Naive thymus-derived CD4-positive, alpha-beta T cell (primary cell): ENCODE measurements at regions of chr4 and their contacts with region 1.

Region 1: GRCh38 chr4:6783053-6783981 is 790 bp downstream of the KIAA0232 start:
- DNase-seq: peak; percentile 80 to 92 (median 87)
- ATAC-seq: peak; percentile 85
- H3K4me3 ChIP-seq: peak overlapping the region; percentile 85
- H3K4me3 Mint-ChIP-seq: peak overlapping the region; percentile 82 to 88 (median 86)
- H3K27ac ChIP-seq: peak overlapping the region; percentile 97
- H3K27ac Mint-ChIP-seq: peak overlapping the region; percentile 64 to 93 (median 84)
- H3K4me1 ChIP-seq: peaks cover 20 to 21% of the 10 kb centered on the region in 2 donors
- H3K4me1 Mint-ChIP-seq: peaks cover 39 to 75% (median 68%) of the 10 kb centered on the region in 7 donors
- H3K27me3 ChIP-seq: no peaks in the 10 kb centered on the region
- H3K27me3 Mint-ChIP-seq: no peaks in the 10 kb centered on the region

Region 2: DNA sequence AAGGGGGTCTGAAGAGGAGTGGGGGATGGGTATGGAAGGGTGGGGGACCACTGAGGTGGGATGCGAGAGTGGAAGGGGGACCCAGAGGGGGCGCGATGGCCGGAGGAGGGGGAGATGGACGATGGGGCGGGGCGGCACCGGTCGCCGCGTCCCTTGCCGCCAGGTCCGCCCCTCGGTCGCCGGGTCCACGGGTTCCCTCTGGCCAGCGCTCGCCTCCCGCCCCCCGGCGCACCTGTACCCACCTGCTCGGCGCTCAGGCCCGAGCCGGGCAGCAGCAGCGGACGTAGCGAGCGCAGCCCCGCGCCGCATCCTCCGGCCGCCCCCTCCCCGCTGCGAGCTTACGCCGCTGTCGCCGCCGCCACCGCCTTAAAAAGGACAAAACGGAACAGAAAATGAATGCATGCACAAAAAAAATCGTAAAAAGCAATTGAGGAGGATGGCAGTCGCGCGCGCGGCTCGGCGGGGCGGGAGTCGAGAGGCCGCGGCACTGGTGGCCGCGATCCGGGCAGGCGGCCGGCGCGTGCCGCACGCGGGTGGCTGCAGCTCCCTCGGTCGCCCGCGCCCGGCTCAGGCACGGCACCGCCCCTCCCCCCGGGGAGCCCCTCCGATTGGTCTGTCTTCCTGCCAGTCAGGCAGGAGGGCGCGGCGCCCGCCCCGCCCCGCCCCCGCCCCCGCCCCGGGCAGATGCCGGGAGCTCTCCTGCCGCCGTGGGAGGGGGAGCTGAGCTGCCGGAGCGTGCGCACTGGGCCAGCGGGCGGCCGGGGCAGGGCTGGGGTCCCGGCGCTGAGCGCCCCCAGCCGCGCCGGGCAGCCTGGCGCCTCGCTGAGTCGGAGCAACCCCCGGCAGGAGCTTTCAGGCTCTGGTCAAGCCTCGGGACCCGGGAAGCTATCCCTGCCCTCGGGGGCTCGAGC is 583.1 kb before region 1 on chr4 and contains the start of gene JAKMIP1:
- CTCF ChIA-PET with region 1: no interaction called
- POLR2A ChIA-PET with region 1: no interaction called
- intact Hi-C with region 1: loop called in 1 of 2 experiments (anchors 2 kb)
- DNase-seq: peak; percentile 1 to 96 (median 43)
- ATAC-seq: peak; percentile 81
- H3K4me3 ChIP-seq: peak within 1 kb of the TSS; percentile 43
- H3K4me3 Mint-ChIP-seq: peak within 1 kb of the TSS; percentile 61 to 89 (median 76)
- H3K27ac ChIP-seq: no peak within 1 kb of the TSS
- H3K27ac Mint-ChIP-seq: peak within 1 kb of the TSS in 2 of 9 donors; percentile 71 to 73
- H3K4me1 ChIP-seq: peaks cover 8 to 30% of the 10 kb centered on the region in 2 donors
- H3K4me1 Mint-ChIP-seq: peaks cover 5 to 28% (median 17%) of the 10 kb centered on the region in 7 donors
- H3K27me3 ChIP-seq: peaks cover 0 to 6% of the 10 kb centered on the region in 2 donors
- H3K27me3 Mint-ChIP-seq: peaks cover 36 to 66% (median 45%) of the 10 kb centered on the region in 5 donors
- total RNA-seq, gene JAKMIP1: 0.66 to 15.3 (median 4.1) TPM in 3 of 5 experiments, not detected in the others

Region 3: GRCh38 chr4:6673660-6674499 is 109.4 kb before region 1 on chr4:
- CTCF ChIA-PET with region 1: interaction called, 3 read pairs
- POLR2A ChIA-PET with region 1: interaction called, 35 read pairs
- intact Hi-C with region 1: loop called (anchors 1 kb)
- DNase-seq: peak; percentile 89 to 97 (median 95)
- ATAC-seq: peak; percentile 93
- H3K4me3 ChIP-seq: peak overlapping the region; percentile 74
- H3K4me3 Mint-ChIP-seq: peak overlapping the region; percentile 90 to 100 (median 98)
- H3K27ac ChIP-seq: peak overlapping the region; percentile 83
- H3K27ac Mint-ChIP-seq: peak overlapping the region; percentile 88 to 100 (median 98)
- H3K4me1 ChIP-seq: peaks cover 30 to 34% of the 10 kb centered on the region in 2 donors
- H3K4me1 Mint-ChIP-seq: peaks cover 33 to 53% (median 50%) of the 10 kb centered on the region in 7 donors
- H3K27me3 ChIP-seq: no peaks in the 10 kb centered on the region
- H3K27me3 Mint-ChIP-seq: peaks cover 0 to 3% (median 0%) of the 10 kb centered on the region in 5 donors

Region 4: GRCh38 chr4:6768539-6768905 is 14.8 kb before region 1 on chr4:
- CTCF ChIA-PET with region 1: interaction called, 4 read pairs
- POLR2A ChIA-PET with region 1: interaction called, 15 read pairs
- intact Hi-C with region 1: no loop called
- DNase-seq: no peak
- ATAC-seq: peak; percentile 76
- H3K4me3 ChIP-seq: no peak overlapping the region
- H3K4me3 Mint-ChIP-seq: peak overlapping the region in 4 of 10 donors; percentile 9 to 61 (median 41)
- H3K27ac ChIP-seq: no peak overlapping the region
- H3K27ac Mint-ChIP-seq: peak overlapping the region in 1 of 9 donors; percentile 36
- H3K4me1 ChIP-seq: peaks cover 4 to 16% of the 10 kb centered on the region in 2 donors
- H3K4me1 Mint-ChIP-seq: peaks cover 7 to 24% (median 14%) of the 10 kb centered on the region in 7 donors
- H3K27me3 ChIP-seq: no peaks in the 10 kb centered on the region
- H3K27me3 Mint-ChIP-seq: peaks cover 0 to 19% (median 0%) of the 10 kb centered on the region in 5 donors

Region 5: DNA sequence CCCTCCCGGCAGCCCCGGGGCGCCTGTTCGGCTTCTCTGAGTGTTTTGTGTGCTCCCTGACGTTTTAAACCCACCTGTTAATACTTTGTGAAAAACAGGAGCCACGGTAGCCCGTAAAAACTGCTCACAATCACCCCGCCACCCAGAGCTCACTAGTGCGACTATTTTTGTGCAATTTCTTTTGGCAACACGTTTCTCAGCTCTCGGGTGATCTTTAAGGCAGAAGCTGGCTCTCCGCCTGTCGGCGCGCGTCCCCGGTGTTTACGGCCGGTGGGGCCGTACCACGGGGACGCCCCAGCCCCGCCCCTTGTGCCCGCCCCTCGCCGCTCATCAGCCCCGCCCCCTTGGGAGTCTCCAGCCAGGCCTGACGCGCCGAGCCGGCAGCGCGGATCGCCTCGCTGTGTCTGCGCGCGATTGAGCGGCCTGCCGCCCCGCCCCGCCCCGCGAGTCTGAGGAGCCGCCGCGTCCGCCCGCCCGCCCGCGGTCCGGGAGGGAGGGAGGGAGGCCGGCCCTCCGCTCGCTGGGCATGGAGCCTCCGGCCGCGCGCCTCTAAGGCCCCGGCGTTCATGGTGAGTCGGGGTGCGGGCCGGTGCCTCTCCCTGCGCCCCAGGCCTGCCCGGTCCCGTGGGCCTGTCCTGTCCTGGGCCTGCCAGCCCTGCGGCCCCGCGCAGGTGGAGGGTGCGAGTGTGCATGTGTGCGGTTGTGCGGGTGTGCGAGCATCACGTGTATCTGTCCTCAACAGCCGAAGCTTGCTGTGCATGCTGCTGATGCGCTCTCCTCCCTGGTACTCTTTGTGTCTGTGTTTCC is 203.7 kb after region 1 on chr4:
- CTCF ChIA-PET with region 1: no interaction called
- POLR2A ChIA-PET with region 1: interaction called, 3 read pairs
- intact Hi-C with region 1: loop called (anchors 1 kb)
- DNase-seq: peak; percentile 87 to 95 (median 92)
- ATAC-seq: peak; percentile 98
- H3K4me3 ChIP-seq: peak overlapping the region; percentile 82
- H3K4me3 Mint-ChIP-seq: peak overlapping the region; percentile 94 to 100 (median 97)
- H3K27ac ChIP-seq: peak overlapping the region; percentile 86
- H3K27ac Mint-ChIP-seq: peak overlapping the region; percentile 89 to 99 (median 98)
- H3K4me1 ChIP-seq: peaks cover 29 to 37% of the 10 kb centered on the region in 2 donors
- H3K4me1 Mint-ChIP-seq: peaks cover 57 to 93% (median 84%) of the 10 kb centered on the region in 7 donors
- H3K27me3 ChIP-seq: no peaks in the 10 kb centered on the region
- H3K27me3 Mint-ChIP-seq: no peaks in the 10 kb centered on the region

Region 6: DNA sequence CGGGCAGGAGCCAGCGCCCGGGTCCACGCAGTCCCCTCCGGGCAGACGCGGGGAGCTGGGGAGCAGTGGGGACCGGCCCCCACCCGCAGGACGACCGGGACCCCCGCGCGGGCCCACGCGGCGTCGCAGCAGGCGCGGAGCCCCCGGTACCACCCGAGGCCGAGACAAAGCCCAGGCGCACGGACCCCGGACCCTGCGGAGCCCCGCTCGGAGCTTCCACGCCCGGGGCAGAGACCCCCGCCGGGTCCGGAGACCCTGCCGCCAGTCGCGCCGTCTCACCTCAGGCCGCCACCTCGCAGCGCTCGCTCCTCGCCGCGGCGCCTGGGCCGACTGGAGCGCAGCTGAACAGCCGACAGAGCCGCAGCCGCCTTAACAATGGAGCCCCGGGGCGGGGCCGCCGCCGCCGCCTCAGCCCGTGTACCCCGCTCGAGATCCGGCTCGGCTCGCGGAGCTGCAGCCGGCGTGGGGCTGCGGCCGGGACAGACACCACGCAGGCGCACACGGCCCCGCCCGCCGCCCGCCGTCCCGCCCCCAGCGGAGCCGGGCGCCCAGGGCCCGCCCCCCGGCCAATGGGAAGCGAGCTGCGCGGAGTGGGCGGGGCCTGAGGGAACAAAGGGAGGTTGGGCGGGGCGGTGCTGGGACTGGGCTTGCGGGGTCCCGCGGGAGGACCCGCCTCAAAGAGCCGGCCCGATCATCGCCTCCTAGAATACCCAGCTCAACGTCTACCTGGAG is 1156.2 kb after region 1 on chr4 and contains the start of gene AFAP1:
- CTCF ChIA-PET with region 1: no interaction called
- POLR2A ChIA-PET with region 1: no interaction called
- intact Hi-C with region 1: loop called in 1 of 2 experiments (anchors 1 kb)
- DNase-seq: peak; percentile 84 to 95 (median 89)
- ATAC-seq: peak; percentile 95
- H3K4me3 ChIP-seq: peak within 1 kb of the TSS; percentile 68
- H3K4me3 Mint-ChIP-seq: peak within 1 kb of the TSS; percentile 64 to 91 (median 74)
- H3K27ac ChIP-seq: peak within 1 kb of the TSS; percentile 78
- H3K27ac Mint-ChIP-seq: peak within 1 kb of the TSS in 4 of 9 donors; percentile 63 to 89 (median 74)
- H3K4me1 ChIP-seq: peaks cover 10 to 12% of the 10 kb centered on the region in 2 donors
- H3K4me1 Mint-ChIP-seq: peaks cover 16 to 42% (median 33%) of the 10 kb centered on the region in 7 donors
- H3K27me3 ChIP-seq: no peaks in the 10 kb centered on the region
- H3K27me3 Mint-ChIP-seq: peaks cover 0 to 30% (median 0%) of the 10 kb centered on the region in 5 donors
- total RNA-seq, gene AFAP1: 8.6 to 27.2 (median 13.3) TPM